Dendritic cell treated with granulocyte-macrophage colony-stimulating factor and Interleukin-4, amounts not matched to agents 40 ng/mL and 50 ng/mL, for 4 days (primary cell): ENCODE measurements at regions of chr17 and their contacts with region 1.

Region 1: DNA sequence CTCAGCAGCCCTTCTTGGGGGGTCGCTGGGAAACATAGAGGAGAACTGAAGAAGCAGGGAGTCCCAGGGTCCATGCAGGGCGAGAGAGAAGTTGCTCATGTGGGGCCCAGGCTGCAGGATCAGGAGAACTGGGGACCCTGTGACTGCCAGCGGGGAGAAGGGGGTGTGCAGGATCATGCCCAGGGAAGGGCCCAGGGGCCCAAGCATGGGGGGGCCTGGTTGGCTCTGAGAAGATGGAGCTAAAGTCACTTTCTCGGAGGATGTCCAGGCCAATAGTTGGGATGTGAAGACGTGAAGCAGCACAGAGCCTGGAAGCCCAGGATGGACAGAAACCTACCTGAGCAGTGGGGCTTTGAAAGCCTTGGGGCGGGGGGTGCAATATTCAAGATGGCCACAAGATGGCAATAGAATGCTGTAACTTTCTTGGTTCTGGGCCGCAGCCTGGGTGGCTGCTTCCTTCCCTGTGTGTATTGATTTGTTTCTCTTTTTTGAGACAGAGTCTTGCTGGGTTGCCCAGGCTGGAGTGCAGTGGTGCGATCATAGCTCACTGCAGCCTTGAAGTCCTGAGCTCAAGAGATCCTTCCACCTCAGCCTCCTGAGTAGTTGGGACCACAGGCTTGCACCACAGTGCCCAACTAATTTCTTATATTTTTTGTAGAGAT is 3.4 kb downstream of the STH start:
- H3K4me3 Mint-ChIP-seq: no peak overlapping the region
- H3K27ac Mint-ChIP-seq: no peak overlapping the region
- H3K4me1 Mint-ChIP-seq: no peaks in the 10 kb centered on the region
- H3K27me3 Mint-ChIP-seq: peaks cover 7% of the 10 kb centered on the region

Region 2: DNA sequence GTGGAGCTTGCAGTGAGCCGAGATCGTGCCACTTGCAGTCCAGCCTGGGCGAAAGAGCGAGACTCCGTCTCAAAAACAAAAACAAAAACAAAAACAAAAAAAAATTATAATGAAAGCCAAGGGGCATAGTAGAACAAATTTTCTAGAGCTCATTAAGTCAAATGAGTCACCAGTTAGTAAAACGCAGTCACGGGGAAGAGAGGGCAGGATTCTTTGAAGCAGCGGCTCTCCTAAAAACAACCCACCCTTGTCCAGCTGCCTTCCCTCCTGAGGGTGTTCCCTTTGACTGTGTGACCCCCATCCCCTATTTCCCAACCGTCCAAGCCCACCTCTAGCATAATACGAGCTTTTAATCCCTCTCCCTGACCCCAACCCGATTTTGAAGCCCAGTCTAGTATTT is 47.5 kb before region 1 on chr17:
- intact Hi-C with region 1: no loop called
- H3K4me3 Mint-ChIP-seq: no peak overlapping the region
- H3K27ac Mint-ChIP-seq: no peak overlapping the region
- H3K4me1 Mint-ChIP-seq: no peaks in the 10 kb centered on the region
- H3K27me3 Mint-ChIP-seq: peaks cover 37% of the 10 kb centered on the region

Region 3: GRCh38 chr17:45971698-45972141 is 30.7 kb before region 1 on chr17:
- intact Hi-C with region 1: no loop called
- H3K4me3 Mint-ChIP-seq: no peak overlapping the region
- H3K27ac Mint-ChIP-seq: no peak overlapping the region
- H3K4me1 Mint-ChIP-seq: no peaks in the 10 kb centered on the region
- H3K27me3 Mint-ChIP-seq: peaks cover 18% of the 10 kb centered on the region

Region 4: GRCh38 chr17:46044286-46044928 is 42.0 kb after region 1 on chr17:
- intact Hi-C with region 1: loop called (anchors 1 kb)
- H3K4me3 Mint-ChIP-seq: no peak overlapping the region
- H3K27ac Mint-ChIP-seq: no peak overlapping the region
- H3K4me1 Mint-ChIP-seq: peaks cover 9% of the 10 kb centered on the region
- H3K27me3 Mint-ChIP-seq: no peaks in the 10 kb centered on the region

Region 5: DNA sequence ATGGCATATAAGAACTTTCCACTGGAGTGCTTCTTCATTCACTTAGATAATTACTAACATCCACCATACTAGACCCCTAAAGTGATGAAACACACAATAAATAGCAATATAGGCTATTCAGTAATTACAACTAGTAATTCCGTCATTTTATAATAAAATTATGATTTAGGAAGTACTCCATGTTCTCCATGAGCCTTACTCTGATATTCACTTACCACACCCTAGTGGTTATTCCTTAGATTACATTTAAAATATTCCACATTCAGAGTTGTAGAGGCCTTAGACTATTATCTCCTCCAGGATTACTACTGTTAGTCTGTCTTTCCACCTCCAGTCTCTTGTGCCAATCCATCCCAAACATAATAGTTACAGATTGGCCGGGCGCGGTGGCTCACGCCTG is 59.0 kb after region 1 on chr17:
- intact Hi-C with region 1: loop called (anchors 1 kb)
- H3K4me3 Mint-ChIP-seq: no peak overlapping the region
- H3K27ac Mint-ChIP-seq: no peak overlapping the region
- H3K4me1 Mint-ChIP-seq: peaks cover 5% of the 10 kb centered on the region
- H3K27me3 Mint-ChIP-seq: no peaks in the 10 kb centered on the region

Region 6: DNA sequence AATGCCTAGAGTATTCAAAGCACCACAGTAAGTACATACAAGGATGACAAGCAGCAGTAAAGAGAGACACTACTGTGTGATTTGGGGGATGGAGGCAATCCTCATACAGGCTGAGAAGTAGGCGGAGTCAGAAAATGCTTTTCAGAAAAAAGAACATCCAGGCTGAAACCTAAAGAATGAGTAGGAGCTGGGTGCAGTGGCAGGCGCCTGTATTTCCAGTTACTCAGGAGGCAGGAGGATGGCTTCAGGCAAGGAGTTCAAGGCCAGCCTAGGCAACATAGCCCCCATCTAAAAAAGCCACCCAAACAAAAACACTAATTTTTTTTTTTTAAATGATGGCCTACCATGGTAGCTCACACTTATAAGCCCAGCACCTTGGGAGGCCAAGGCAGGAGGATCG is 180.5 kb after region 1 on chr17:
- intact Hi-C with region 1: loop called (anchors 10 kb)
- H3K4me3 Mint-ChIP-seq: no peak overlapping the region
- H3K27ac Mint-ChIP-seq: peak overlapping the region; percentile 75
- H3K4me1 Mint-ChIP-seq: peaks cover 94% of the 10 kb centered on the region
- H3K27me3 Mint-ChIP-seq: no peaks in the 10 kb centered on the region

Region 7: DNA sequence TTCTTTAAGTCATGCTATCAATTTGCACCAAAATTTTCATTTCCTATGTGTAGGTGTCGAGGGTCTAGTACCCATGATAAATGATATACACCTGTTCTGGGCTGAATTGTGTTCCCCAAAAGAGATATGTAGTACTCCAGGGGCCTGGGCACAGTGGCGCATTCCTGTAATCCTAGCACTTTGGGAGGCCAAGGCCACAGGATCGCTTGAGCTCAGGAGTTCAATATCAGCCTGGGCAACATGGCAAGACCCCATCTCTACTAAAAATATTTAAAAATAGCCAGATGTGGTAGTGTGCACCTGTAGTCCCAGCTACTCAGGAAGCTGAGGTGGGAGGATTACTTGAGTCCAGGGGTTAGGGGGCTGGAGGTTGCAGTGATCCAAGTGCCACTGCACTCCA is 214.2 kb after region 1 on chr17:
- intact Hi-C with region 1: loop called (anchors 5 kb)
- H3K4me3 Mint-ChIP-seq: no peak overlapping the region
- H3K27ac Mint-ChIP-seq: peak overlapping the region; percentile 63
- H3K4me1 Mint-ChIP-seq: peaks cover 40% of the 10 kb centered on the region
- H3K27me3 Mint-ChIP-seq: no peaks in the 10 kb centered on the region